Heart right ventricle (tissue), 16 donors: ENCODE measurements at regions of chr22 and their contacts with region 1.

Region 1: DNA sequence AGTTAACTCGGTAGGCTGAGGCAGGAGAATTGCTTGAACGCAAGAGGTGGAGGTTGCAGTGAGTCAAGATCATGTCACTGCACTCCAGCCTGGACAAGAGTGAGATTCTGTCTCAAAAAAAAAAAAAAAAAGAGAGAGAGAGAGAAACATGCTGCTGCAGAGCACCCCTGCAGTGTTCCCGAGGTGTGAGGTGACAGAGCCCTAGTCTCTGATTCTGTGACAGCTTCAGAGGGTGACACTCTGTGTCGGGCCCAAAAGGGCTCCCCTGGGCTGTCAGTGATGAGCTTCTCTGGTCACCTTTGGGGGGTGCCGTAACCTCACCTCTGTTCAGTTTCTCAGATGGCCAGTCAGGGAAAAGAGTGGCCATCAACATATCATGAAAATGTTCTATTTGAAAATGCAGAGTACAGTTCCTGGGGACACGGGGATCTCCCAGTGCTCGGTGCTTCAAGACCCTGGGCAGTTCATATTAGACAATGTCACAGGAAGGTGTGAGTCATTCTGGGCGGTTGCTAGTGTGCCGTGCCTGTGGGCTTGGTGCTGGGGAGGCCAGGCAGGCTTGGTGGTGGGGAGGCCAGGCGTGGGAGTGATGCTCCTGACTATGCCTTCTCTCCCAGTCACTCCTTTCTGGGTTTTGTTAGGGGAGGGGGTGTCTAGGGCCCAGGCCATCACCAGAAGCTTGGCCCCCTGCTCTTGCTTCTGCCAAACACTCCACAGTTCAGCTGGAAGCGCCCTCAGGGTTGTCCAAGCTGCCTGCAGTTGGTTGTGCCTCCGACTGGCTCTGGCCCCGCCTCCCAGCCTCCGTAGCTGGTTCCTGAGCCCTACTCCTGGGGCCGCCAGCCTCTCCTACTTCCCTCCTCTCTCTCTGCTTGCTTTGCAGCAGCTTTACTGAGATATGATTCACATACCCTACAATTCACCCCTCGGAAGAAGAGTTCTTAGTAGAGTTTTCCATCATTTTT is 52.5 kb upstream of the CLDN5 start:
- DNase-seq: peak; percentile 36 to 48
- ATAC-seq: peak; percentile 31 to 85 (median 78)
- H3K4me3 ChIP-seq: no peak overlapping the region
- H3K27ac ChIP-seq: peak overlapping the region in 9 of 10 donors; percentile 51 to 81 (median 69)
- H3K4me1 ChIP-seq: peaks cover 6 to 53% (median 40%) of the 10 kb centered on the region in 9 donors
- H3K27me3 ChIP-seq: peaks cover 0 to 20% (median 0%) of the 10 kb centered on the region in 7 donors
- CTCF ChIP-seq: no peak

Region 2: GRCh38 chr22:19619144-19620009 is 42.6 kb after region 1 on chr22:
- intact Hi-C with region 1: loop called in 2 of 10 experiments (anchors 5 kb)
- DNase-seq: no peak
- ATAC-seq: no peak
- H3K4me3 ChIP-seq: no peak overlapping the region
- H3K27ac ChIP-seq: no peak overlapping the region
- H3K4me1 ChIP-seq: peaks cover 4 to 24% (median 12%) of the 10 kb centered on the region in 9 donors
- H3K27me3 ChIP-seq: peaks cover 0 to 19% (median 8%) of the 10 kb centered on the region in 7 donors
- CTCF ChIP-seq: no peak